ENCODE measurements at regions of chr21 and their contacts with region 1.

Region 1: DNA sequence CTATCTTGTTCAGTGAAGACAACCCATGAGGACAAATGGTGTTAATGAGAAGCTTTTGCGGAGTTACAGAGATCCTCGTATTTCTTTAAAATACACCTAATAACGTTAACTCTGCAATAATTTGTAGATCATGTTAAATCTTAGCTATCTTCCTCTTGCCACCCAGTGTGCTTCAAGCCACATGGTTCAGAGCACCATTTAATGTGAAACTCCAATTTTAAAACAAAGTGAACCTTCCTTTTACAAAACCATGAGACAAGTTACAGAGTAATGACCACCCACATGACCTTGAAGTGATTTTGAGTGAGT is 1.7 kb upstream of the KCNE2 start:
- DNase-seq: no peak
- H3K4me3 ChIP-seq: no peak overlapping the region
- CTCF ChIP-seq: no peak

Region 2: GRCh38 chr21:34180826-34181359 is 181.2 kb before region 1 on chr21:
- CTCF ChIA-PET with region 1: no interaction called
- POLR2A ChIA-PET with region 1: no interaction called
- DNase-seq: no peak
- H3K4me3 ChIP-seq: no peak overlapping the region
- CTCF ChIP-seq: no peak

Region 3: GRCh38 chr21:34619841-34620665 is 258.0 kb after region 1 on chr21:
- CTCF ChIA-PET with region 1: interaction called, 70 read pairs
- POLR2A ChIA-PET with region 1: no interaction called
- DNase-seq: no peak
- H3K4me3 ChIP-seq: no peak overlapping the region
- CTCF ChIP-seq: no peak

Measured in AG04449 (cell line).